ENCODE measurements at regions of chr1 and their contacts with region 1.

Region 1: DNA sequence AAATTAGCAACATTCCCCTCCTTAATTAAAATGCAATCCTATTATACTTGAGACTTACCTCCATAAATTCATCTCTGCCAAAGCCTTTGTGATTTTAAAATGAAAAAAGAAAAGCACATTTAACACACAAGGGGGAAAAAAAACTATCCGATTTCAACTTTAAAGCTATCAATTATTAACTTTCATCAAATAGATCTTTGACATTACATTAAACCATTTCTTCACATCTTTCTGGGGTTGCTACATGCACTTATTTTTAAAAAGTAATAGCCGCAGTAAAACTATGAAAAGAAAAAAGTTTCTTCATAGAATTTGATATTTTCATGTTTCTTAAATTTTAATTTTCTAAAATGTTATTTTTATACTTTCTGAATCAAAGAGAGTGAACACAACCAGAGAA is 71.0 kb downstream of the EVI5 start:
- DNase-seq: no peak
- ATAC-seq: no peak

Region 2: GRCh38 chr1:92698932-92699331 is 15.0 kb before region 1 on chr1:
- intact Hi-C with region 1: loop called (anchors 2 kb)
- DNase-seq: no peak
- ATAC-seq: peak; percentile 80

Region 3: GRCh38 chr1:92774407-92774806 is 60.5 kb after region 1 on chr1:
- intact Hi-C with region 1: no loop called
- DNase-seq: no peak
- ATAC-seq: no peak

Measured in Right ventricle myocardium inferior (tissue), 1 donor.